ENCODE measurements at regions of chr13 and their contacts with region 1.

Region 1: GRCh38 chr13:20161275-20161950 is 561 bp upstream of the GJA3 start:
- H3K4me3 ChIP-seq: peak overlapping the region; percentile 58
- H3K27ac ChIP-seq: peak overlapping the region; percentile 49; the same call in 1 of the 2 replicates
- H3K4me1 ChIP-seq: no peaks in the 10 kb centered on the region
- CTCF ChIP-seq: no peak

Region 2: GRCh38 chr13:19984430-19985218 is 176.8 kb before region 1 on chr13:
- CTCF ChIA-PET with region 1: interaction called, 10 read pairs
- POLR2A ChIA-PET with region 1: no interaction called
- H3K4me3 ChIP-seq: no peak overlapping the region
- H3K27ac ChIP-seq: no peak overlapping the region
- H3K4me1 ChIP-seq: no peaks in the 10 kb centered on the region
- CTCF ChIP-seq: no peak

Region 3: GRCh38 chr13:20035130-20035529 is 126.3 kb before region 1 on chr13:
- CTCF ChIA-PET with region 1: interaction called, 15 read pairs
- POLR2A ChIA-PET with region 1: no interaction called
- H3K4me3 ChIP-seq: no peak overlapping the region
- H3K27ac ChIP-seq: no peak overlapping the region
- H3K4me1 ChIP-seq: no peaks in the 10 kb centered on the region
- CTCF ChIP-seq: no peak